ENCODE measurements at regions of chr12 and their contacts with region 1.

Region 1: DNA sequence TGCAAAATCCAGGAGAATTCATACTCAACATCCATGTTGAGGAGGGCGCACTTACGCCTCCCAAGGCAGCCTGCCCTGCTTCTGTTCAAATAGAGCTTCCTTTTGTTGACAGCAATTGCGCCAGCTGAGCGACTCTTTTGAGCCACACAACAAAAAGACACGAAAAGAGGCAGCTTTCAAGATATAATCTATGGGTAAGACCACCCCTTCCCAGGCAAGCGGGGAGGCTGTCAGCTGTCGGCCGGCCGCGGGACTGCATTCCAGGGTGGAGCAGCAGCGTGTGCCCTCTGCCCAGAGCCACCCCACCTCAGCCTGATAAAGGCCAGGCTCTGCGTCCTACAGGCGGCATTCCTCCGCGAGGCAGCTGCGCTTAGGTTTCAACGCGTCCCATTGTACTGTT is 15.8 kb upstream of the STAB2 start:
- DNase-seq: peak; percentile 13
- H3K4me3 ChIP-seq: no peak overlapping the region
- H3K27ac ChIP-seq: no peak overlapping the region
- H3K4me1 ChIP-seq: no peaks in the 10 kb centered on the region
- H3K27me3 ChIP-seq: peaks cover 7 to 13% of the 10 kb centered on the region in 2 experiments
- CTCF ChIP-seq: no peak
- POLR2A ChIP-seq: no peak

Region 2: DNA sequence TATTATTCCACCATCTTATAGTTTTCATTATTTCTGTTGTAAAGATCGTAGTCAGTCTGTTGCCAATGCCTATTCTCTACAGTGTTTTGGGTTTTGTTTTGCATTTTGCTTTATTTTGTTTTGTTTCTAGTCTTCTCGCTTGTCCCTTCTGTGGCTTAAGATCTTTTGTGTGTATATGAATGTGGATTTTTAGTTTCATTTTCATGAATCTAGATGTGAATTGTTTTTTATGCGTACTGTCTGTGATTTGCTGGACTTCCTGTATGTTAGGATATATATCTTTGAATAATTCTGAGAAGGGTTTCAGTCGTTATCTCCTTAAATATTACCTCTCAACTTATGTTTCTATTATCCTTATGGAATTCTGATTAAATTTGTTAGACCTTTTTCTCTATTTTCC is 88.9 kb before region 1 on chr12:
- CTCF ChIA-PET with region 1: no interaction called
- POLR2A ChIA-PET with region 1: no interaction called
- dilution Hi-C with region 1: no loop called
- intact Hi-C with region 1: no loop called
- DNase-seq: no peak
- H3K4me3 ChIP-seq: no peak overlapping the region
- H3K27ac ChIP-seq: no peak overlapping the region
- H3K4me1 ChIP-seq: no peaks in the 10 kb centered on the region
- H3K27me3 ChIP-seq: no peaks in the 10 kb centered on the region
- CTCF ChIP-seq: no peak
- POLR2A ChIP-seq: no peak

Region 3: DNA sequence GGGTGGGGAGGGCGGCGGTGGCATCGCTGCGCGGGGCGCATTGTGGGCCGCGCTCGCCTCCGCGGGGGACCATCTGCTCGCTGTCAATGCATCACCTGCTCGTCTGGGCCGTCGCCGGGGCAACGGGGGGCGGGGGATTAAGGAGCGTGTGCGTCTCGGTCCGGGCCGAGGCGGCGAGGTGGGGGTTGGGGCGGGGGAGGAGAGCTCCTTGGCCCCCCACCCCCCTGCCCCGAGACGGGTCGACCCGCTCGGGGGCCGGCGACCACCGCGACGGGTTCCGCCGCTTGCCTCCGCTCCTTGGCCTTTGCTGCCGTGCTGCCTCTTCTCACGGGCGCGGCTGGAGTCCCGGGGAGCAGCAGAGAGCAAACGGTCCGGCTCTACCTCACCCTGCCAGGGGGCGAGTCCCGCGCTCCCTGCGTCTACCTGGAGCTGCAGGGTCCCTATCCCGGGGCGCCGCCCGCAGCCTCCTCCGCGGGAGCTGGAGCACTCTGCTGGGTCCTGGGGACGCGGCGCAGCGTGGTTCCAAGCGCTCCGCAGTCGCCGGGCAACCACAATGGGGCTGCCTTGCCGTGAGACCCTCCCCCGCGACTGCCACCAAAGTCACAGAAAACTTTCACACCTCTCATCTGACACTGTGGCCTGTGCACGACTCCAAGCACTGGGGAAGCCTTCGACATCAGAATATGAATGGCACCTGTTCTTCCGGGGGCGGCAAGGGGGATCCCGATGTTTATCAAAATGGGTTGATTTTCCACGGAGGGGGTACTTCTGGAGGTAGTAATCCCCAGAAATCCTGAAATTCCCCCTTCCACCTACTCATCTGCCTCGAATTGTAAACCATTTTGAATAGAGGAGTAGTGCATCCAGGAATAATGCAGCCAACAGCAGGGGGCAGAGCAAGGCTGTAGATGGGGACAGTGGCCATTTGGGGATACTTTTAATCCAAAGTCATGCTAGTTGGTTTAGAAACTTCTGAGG is 75.5 kb before region 1 on chr12 and contains the start of gene C12orf42:
- CTCF ChIA-PET with region 1: no interaction called
- POLR2A ChIA-PET with region 1: no interaction called
- dilution Hi-C with region 1: no loop called
- intact Hi-C with region 1: no loop called
- DNase-seq: peak; percentile 5
- H3K4me3 ChIP-seq: no peak within 1 kb of the TSS
- H3K27ac ChIP-seq: no peak within 1 kb of the TSS
- H3K4me1 ChIP-seq: no peaks in the 10 kb centered on the region
- H3K27me3 ChIP-seq: peaks cover 0 to 4% of the 10 kb centered on the region in 2 experiments
- CTCF ChIP-seq: peak in 1 of 2 donors; percentile 17
- POLR2A ChIP-seq: no peak
- total RNA-seq, gene C12orf42: not detected in 2 replicates

Region 4: DNA sequence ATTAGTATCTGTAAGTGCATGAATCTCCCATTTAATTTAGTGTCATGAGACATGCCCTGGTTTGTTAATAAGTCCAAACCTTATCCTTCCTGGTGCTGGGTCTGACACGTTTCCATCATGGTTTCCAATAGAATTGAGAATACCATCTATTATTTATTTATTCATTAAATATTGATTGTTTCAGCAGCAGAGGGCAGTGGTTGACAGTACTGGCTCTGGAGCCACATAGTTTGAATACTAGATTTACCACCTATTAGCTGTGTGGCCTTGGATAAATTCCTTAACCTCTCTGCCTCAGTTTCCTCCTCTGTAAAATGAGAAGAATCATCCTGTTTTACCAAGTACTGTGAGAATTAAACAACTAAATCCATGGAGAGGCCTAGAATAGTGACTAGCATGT is 14.8 kb after region 1 on chr12:
- CTCF ChIA-PET with region 1: interaction called, 11 read pairs
- POLR2A ChIA-PET with region 1: no interaction called
- dilution Hi-C with region 1: no loop called
- intact Hi-C with region 1: no loop called
- DNase-seq: no peak
- H3K4me3 ChIP-seq: no peak overlapping the region
- H3K27ac ChIP-seq: no peak overlapping the region
- H3K4me1 ChIP-seq: no peaks in the 10 kb centered on the region
- H3K27me3 ChIP-seq: no peaks in the 10 kb centered on the region
- CTCF ChIP-seq: no peak
- POLR2A ChIP-seq: no peak

Region 5: DNA sequence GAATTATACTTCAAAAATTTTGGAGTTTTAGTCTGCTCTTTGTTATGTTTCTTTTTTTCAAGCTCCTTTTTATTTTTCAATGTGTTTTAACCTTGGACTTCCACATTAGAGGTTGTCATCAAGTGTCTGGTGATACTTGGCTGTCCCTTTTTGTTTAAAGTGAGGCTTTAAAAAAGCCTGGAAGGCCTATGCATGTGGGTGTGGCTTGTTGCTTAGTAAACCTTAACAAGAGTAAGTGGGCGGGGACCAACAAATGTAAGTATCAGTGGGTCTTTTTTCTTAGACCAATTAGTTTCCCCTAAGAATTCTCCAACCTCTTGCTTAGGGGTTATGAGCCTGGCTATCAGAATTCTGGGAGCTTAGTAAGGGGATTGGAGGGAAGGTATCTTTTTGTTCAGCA is 519.4 kb after region 1 on chr12:
- CTCF ChIA-PET with region 1: no interaction called
- POLR2A ChIA-PET with region 1: no interaction called
- dilution Hi-C with region 1: no loop called
- intact Hi-C with region 1: no loop called
- DNase-seq: no peak
- H3K4me3 ChIP-seq: no peak overlapping the region
- H3K27ac ChIP-seq: no peak overlapping the region
- H3K4me1 ChIP-seq: no peaks in the 10 kb centered on the region
- H3K27me3 ChIP-seq: no peaks in the 10 kb centered on the region
- CTCF ChIP-seq: no peak
- POLR2A ChIP-seq: no peak